ENCODE measurements at regions of chr6 and their contacts with region 1.

Region 1: GRCh38 chr6:42661540-42662153 is 60.8 kb downstream of the PRPH2 start:
- DNase-seq: peak; percentile 87 to 90
- H3K4me3 ChIP-seq: no peak overlapping the region
- H3K27ac ChIP-seq: no peak overlapping the region
- H3K4me1 ChIP-seq: peaks cover 0 to 7% (median 0%) of the 10 kb centered on the region in 4 donors
- H3K27me3 ChIP-seq: no peaks in the 10 kb centered on the region
- CTCF ChIP-seq: peak in 5 of 7 experiments; percentile 82 to 91 (median 88)
- EP300 ChIP-seq: no peak
- POLR2A ChIP-seq: no peak

Region 2: GRCh38 chr6:42726485-42727086 is 64.9 kb after region 1 on chr6:
- intact Hi-C with region 1: loop called (anchors 10 kb)
- DNase-seq: peak; percentile 81 to 96
- H3K4me3 ChIP-seq: peak overlapping the region; percentile 54 to 61 (median 60)
- H3K27ac ChIP-seq: peak overlapping the region; percentile 69 to 89 (median 88)
- H3K4me1 ChIP-seq: peaks cover 5 to 20% (median 8%) of the 10 kb centered on the region in 4 donors
- H3K27me3 ChIP-seq: no peaks in the 10 kb centered on the region
- CTCF ChIP-seq: peak in 5 of 7 experiments; percentile 77 to 98 (median 92)
- EP300 ChIP-seq: no peak
- POLR2A ChIP-seq: no peak

Region 3: DNA sequence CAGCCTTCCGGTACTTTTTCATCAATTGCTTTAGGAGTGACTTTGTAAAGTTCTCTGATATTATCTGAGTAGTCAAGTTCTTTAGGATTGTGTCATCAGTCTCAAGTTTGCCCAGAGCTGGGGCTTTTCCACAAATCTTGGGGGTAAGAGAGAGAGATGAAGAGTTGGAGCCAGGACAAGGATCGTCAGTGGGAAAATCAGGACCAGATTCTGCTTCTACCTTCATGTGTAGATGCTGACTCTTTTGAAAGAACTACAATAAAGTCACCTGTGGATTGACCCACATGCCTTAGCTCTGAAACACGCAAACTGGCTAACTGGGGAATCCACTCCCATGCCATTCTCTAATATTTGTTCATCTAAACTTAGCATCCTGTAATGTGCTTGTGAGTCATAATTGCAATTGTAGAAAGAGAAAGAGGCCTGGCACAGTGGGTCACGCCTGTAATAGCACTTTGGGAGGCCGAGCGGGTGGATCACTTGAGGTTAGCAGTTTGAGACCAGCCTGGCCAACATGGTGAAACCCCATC is 104.6 kb after region 1 on chr6:
- intact Hi-C with region 1: no loop called
- DNase-seq: no peak
- H3K4me3 ChIP-seq: no peak overlapping the region
- H3K27ac ChIP-seq: no peak overlapping the region
- H3K4me1 ChIP-seq: peaks cover 0 to 9% (median 7%) of the 10 kb centered on the region in 4 donors
- H3K27me3 ChIP-seq: no peaks in the 10 kb centered on the region
- CTCF ChIP-seq: no peak
- EP300 ChIP-seq: no peak
- POLR2A ChIP-seq: no peak

Region 4: GRCh38 chr6:42879372-42880239 is 218.0 kb after region 1 on chr6 and contains the start of gene RPL7L1:
- intact Hi-C with region 1: loop called (anchors 5 kb)
- DNase-seq: peak; percentile 82 to 95
- H3K4me3 ChIP-seq: peak within 1 kb of the TSS; percentile 65 to 85 (median 77)
- H3K27ac ChIP-seq: peak within 1 kb of the TSS; percentile 85 to 96 (median 94)
- H3K4me1 ChIP-seq: peaks cover 24 to 46% (median 38%) of the 10 kb centered on the region in 4 donors
- H3K27me3 ChIP-seq: no peaks in the 10 kb centered on the region
- CTCF ChIP-seq: peak in 2 of 7 experiments; percentile 26 to 40
- EP300 ChIP-seq: no peak
- POLR2A ChIP-seq: peak in 1 of 4 donors; percentile 28
- total RNA-seq, gene RPL7L1: 7.2 to 105 (median 21.4) TPM